AG04450 (cell line): ENCODE measurements at regions of chr10 and their contacts with region 1.

Region 1: DNA sequence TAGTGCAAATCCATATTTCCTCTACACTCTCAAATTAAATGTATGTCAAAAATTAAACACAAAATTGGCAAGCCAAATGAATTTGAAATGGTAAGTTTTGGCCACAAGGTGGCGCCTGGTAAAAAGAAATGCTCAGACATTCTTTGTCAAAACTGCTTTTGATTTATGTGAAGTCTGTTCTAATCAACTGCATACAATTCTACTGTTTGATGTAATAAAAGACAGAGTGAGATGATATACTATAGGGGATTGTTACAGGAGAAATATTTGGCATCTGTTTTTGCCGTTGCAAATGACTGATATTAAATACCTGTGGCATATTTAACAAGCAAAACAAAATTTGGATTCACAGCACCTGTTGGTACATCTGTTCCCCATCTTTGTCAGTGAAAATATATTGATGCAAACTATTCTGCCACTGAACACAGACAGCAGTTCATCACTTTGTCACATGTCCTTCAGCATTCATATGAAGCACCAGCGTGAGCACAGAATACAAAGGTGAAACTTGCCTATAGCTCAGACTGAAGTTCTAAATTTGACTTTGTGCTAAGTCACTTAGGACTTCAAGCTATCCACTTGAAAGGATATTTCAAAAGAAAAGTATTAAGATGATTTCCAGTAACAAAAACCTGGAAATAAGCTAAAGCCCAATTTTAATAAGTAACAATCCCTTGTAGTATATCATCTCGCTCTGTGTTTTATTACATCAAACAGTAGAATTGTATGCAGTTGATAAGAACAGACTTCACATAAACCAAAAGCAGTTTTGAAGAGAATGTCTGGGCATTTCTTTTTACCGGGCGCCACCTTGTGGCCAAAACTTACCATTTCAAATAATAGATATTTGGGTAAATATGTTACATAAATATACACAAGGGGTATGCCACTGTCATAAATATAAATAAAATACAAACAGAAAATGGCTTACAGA is 10.2 kb upstream of the CH25H start:
- DNase-seq: peak; percentile 38
- H3K4me3 ChIP-seq: no peak overlapping the region
- H3K27ac ChIP-seq: no peak overlapping the region
- H3K27me3 ChIP-seq: no peaks in the 10 kb centered on the region
- CTCF ChIP-seq: peak; percentile 67

Region 2: GRCh38 chr10:88281592-88282347 is 935.6 kb before region 1 on chr10:
- CTCF ChIA-PET with region 1: no interaction called
- POLR2A ChIA-PET with region 1: no interaction called
- DNase-seq: no peak
- H3K4me3 ChIP-seq: no peak overlapping the region; the same call in 1 of the 2 replicates
- H3K27ac ChIP-seq: peak overlapping the region; percentile 67
- H3K27me3 ChIP-seq: no peaks in the 10 kb centered on the region
- CTCF ChIP-seq: no peak

Region 3: DNA sequence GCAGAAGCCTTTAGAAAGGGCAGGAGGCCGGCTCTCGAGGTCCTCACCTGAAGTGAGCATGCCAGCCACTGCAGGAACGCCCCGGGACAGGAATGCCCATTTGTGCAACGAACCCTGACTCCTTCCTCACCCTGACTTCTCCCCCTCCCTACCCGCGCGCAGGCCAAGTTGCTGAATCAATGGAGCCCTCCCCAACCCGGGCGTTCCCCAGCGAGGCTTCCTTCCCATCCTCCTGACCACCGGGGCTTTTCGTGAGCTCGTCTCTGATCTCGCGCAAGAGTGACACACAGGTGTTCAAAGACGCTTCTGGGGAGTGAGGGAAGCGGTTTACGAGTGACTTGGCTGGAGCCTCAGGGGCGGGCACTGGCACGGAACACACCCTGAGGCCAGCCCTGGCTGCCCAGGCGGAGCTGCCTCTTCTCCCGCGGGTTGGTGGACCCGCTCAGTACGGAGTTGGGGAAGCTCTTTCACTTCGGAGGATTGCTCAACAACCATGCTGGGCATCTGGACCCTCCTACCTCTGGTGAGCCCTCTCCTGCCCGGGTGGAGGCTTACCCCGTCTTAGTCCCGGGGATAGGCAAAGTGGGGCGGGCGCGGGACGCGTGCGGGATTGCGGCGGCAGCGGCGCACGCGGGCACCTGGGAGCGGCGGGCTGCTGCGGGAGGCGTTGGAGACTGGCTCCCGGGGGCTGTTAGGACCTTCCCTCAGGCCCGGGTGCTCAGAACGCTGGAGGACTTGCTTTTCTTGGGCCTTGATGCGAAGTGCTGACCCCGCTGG is 226.8 kb before region 1 on chr10 and contains the start of gene FAS:
- CTCF ChIA-PET with region 1: interaction called, 20 read pairs
- POLR2A ChIA-PET with region 1: no interaction called
- DNase-seq: no peak
- H3K4me3 ChIP-seq: peak within 1 kb of the TSS; percentile 89
- H3K27ac ChIP-seq: peak within 1 kb of the TSS; percentile 84
- H3K27me3 ChIP-seq: no peaks in the 10 kb centered on the region
- CTCF ChIP-seq: no peak
- polyA plus RNA-seq, gene FAS: 67.0 and 78.4 TPM in 2 replicates

Region 4: DNA sequence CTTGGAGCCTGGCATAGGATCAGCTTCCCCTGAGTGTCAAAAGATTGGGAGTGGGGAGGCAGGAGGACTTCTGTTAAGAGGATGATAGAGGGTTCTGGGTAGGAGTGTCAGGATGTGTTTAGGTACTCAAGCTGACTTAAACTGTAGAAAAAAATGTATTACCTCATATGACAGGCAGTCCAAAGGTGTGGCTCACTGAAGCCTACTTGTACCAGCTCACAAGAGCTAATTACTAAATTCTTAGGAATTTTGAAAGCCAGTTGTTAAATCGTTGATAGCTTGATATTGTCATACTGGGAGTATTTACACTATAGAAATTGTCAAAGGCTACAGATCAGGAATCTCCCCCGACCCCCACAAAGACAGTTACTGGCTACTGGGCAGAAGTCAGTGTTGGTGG is 194.6 kb before region 1 on chr10:
- CTCF ChIA-PET with region 1: interaction called, 24 read pairs
- POLR2A ChIA-PET with region 1: no interaction called
- DNase-seq: no peak
- H3K4me3 ChIP-seq: no peak overlapping the region
- H3K27ac ChIP-seq: no peak overlapping the region
- H3K27me3 ChIP-seq: no peaks in the 10 kb centered on the region
- CTCF ChIP-seq: no peak

Region 5: DNA sequence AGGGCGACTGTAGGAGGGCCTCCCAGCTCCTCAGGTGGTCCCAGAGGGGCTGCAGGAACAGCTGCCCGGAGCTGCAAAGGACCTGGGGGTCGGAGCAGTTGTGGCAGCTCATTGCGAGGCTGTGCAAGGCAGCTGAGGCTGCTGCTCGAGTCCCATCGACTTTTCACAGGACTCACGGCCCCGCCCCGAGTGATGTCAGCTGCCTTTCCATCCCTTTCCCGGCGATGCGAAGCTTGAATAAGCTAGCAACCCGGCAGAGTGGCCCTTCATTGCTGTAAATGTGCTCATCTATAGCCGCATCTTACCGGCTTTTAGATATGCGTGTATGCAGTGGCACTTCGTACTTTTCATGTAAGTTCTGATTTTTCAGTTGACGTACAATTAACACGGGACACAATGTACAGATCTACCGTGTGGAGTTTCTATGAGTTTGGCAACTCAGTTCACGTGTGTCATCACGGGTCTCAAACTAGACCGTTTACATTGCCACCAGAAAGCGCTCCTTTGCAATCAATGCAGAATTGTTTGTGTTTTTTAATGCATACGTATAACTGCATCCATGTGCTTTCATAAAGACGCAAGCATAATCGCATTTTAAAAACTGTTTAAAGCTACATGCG is 10.0 kb before region 1 on chr10 and contains the start of gene CH25H:
- CTCF ChIA-PET with region 1: interaction called, 23 read pairs
- POLR2A ChIA-PET with region 1: no interaction called
- DNase-seq: no peak
- H3K4me3 ChIP-seq: peak within 1 kb of the TSS; percentile 61
- H3K27ac ChIP-seq: peak within 1 kb of the TSS; percentile 34
- H3K27me3 ChIP-seq: no peaks in the 10 kb centered on the region
- CTCF ChIP-seq: no peak
- polyA plus RNA-seq, gene CH25H: 0.71 and 1.1 TPM in 2 replicates

Region 6: GRCh38 chr10:89251409-89252224 is 34.3 kb after region 1 on chr10 and contains the start of gene LIPA:
- CTCF ChIA-PET with region 1: interaction called, 10 read pairs
- POLR2A ChIA-PET with region 1: no interaction called
- DNase-seq: peak; percentile 92
- H3K4me3 ChIP-seq: peak within 1 kb of the TSS; percentile 93
- H3K27ac ChIP-seq: no peak within 1 kb of the TSS
- H3K27me3 ChIP-seq: no peaks in the 10 kb centered on the region
- CTCF ChIP-seq: no peak
- polyA plus RNA-seq, gene LIPA: 48.8 and 51.6 TPM in 2 replicates

Region 7: DNA sequence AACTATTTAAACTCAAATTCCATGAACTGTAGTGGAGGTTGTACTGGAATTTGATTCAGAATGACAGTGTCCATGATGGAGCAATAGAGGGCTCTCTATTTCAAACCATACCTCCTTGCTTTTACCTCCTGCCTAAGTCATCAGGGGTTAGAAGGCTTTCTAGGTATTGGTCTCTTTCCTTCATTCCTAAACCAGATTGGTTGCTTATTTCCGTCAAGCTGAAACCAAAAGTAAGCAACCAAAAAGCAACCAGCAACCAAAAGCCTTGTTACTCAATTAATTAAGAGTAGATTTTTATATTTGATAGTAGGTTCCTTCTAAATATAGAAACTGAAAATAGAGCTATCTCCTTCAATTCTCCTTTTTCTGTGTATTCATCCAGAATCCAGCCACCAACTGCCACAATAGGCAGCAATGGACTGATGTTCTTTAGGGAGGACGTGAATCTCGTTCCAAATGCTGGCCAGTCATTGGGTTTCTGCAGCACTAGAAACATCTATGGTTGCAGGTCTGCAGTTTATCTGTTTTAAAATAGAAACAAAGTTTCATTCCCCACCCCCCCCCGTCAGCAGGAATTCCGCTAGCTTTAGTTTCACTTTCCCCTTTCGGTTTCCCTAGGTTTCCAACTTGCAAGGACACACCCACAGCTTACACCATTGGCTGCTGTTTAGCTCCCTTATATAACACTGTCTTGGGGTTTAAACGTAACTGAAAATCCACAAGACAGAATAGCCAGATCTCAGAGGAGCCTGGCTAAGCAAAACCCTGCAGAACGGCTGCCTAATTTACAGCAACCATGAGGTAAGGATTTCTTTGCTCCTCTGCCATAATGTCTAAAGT is 174.8 kb after region 1 on chr10 and contains the start of gene IFIT1:
- CTCF ChIA-PET with region 1: interaction called, 13 read pairs
- POLR2A ChIA-PET with region 1: no interaction called
- DNase-seq: peak; percentile 85
- H3K4me3 ChIP-seq: peak within 1 kb of the TSS; percentile 75
- H3K27ac ChIP-seq: peak within 1 kb of the TSS; percentile 81
- H3K27me3 ChIP-seq: no peaks in the 10 kb centered on the region
- CTCF ChIP-seq: no peak
- polyA plus RNA-seq, gene IFIT1: 24.3 and 32.8 TPM in 2 replicates